HAP-1 (cell line): ENCODE measurements at regions of chr4 and their contacts with region 1.

Region 1: GRCh38 chr4:171857302-171858012 is 44.3 kb downstream of the GALNTL6 start:
- DNase-seq: no peak
- H3K4me3 ChIP-seq: no peak overlapping the region
- H3K4me1 ChIP-seq: peaks cover 10% of the 10 kb centered on the region; the same call in 1 of the 2 replicates
- H3K27me3 ChIP-seq: no peaks in the 10 kb centered on the region

Region 2: DNA sequence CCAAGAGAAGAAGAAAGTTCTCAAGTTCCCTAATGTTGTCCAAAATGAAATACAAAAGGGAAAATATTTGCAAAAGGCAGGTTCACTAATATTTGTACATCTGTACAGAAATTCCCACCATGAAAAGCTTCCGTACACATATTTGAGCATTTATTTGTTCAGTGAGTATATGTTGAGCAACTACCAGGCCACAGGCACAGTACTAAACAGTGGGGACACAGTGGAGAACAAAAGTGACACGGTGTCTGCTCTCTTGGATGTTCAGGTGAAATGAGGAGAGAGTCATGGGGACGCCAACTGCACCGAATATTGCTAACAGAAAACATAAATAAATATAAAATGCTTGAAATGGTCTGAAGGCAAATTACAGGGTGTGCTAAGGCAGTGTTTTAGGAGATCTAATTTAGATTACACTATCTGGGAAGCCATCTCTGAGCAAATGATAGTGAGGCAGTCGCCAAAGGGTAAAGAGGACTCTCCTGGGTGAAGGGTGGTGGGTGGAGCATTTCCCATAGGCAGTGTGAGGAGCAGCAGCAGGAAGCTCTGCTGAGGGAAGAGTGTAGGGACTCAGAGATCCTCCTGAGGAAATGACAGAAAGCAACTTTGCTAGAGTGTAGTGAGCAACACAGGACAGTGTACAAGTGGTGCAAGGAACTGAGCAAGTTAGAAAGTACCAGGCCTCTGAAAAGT is 330.9 kb after region 1 on chr4:
- in situ Hi-C with region 1: loop called (anchors 25 kb)
- DNase-seq: no peak
- H3K4me3 ChIP-seq: no peak overlapping the region
- H3K4me1 ChIP-seq: no peaks in the 10 kb centered on the region
- H3K27me3 ChIP-seq: no peaks in the 10 kb centered on the region